Heart right ventricle (tissue), 16 donors: ENCODE measurements at regions of chr1 and their contacts with region 1.

Region 1: DNA sequence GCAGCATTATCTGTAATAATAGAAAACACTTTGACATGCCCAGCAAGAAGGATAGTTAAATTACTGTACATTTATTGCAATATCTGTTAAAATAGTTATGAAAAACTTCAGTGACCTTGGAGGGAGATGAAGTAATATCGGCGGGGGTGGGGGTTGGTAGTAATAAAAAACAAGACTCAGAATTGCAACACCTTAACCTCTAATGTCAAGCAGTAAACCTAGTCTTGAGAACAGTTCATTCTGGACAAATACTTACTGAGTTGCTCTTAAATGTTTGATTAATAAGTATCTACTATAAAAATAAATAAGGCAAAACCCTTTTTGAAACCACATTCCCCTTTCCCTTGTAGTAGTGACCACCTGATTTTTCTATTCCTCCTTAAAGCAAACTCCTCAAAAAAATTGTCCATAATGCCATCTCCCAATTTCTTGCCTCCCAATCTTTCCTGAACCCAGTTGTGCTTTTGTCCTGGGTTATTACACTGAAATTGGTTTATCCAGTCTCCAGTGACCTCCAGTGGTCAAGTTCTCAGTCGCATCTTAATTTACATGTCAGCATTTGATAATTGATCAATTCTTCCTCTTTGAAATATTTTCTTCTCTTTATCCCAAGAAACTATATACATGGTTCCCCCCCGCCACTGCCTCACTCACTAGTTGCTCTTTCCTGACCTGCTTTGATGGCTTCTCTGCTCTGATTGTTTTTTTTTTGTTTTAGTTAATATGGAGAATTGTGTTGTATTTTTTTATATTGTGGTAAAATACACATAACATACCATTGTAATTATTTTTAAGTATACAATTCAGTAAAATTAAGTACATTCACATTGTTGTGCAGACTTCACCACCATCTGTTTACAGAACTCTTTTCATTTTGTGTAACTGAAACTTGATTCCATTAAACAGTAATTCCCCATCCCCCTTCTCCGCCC is 36.8 kb downstream of the RAP1A start:
- DNase-seq: peak in 1 of 2 donors; percentile 41
- ATAC-seq: peak in 7 of 8 donors; percentile 67 to 75 (median 70)
- H3K4me3 ChIP-seq: no peak overlapping the region
- H3K27ac ChIP-seq: peak overlapping the region in 2 of 10 donors; percentile 16 to 22
- H3K4me1 ChIP-seq: peaks cover 0 to 80% (median 33%) of the 10 kb centered on the region in 9 donors
- H3K27me3 ChIP-seq: no peaks in the 10 kb centered on the region
- CTCF ChIP-seq: peak; percentile 31 to 81 (median 67)

Region 2: DNA sequence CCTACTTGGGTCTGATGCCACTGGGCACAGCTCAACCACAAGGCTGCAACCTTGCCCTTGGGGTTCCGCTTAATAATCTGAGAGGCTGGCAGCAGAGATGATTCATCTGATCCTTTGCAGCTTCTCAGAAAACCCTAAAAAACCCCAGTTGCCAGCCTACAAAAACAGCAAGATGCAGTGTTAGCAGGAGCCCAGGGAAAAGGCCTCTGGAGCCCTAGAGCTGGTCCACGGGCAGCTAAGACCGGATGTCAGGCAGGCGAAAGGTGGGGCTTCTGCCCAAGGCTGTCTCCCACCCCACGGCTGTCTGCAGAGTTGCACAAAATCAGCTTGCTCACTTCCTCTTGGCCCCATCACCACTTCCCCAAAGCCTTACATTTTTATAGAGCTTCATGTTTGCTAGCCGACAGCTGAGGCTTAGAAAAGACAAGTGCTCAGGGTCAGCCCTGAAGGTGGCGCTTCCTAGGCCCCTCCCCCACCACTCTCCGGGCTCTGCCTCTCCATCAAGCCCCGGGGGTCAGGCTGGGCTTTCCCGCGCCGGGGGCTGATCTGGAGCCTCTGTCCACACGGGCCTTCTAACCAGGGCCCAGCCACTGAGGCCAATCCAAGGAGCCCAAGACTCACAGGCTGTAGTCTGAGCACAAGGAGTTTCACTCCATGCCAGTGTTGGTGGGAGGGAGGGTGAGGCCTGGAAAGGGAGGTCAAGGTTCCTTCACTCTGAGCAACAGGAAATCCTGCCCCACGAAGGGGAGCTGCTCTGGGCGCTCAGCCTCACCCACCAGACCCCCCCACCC is 148.7 kb before region 1 on chr1:
- intact Hi-C with region 1: loop called (anchors 1 to 5 kb)
- DNase-seq: peak; percentile 73 to 79
- ATAC-seq: peak; percentile 59 to 85 (median 75)
- H3K4me3 ChIP-seq: peak overlapping the region in 9 of 10 donors; percentile 6 to 52 (median 31)
- H3K27ac ChIP-seq: peak overlapping the region; percentile 61 to 99 (median 90)
- H3K4me1 ChIP-seq: peaks cover 20 to 95% (median 48%) of the 10 kb centered on the region in 9 donors
- H3K27me3 ChIP-seq: no peaks in the 10 kb centered on the region
- CTCF ChIP-seq: no peak

Region 3: DNA sequence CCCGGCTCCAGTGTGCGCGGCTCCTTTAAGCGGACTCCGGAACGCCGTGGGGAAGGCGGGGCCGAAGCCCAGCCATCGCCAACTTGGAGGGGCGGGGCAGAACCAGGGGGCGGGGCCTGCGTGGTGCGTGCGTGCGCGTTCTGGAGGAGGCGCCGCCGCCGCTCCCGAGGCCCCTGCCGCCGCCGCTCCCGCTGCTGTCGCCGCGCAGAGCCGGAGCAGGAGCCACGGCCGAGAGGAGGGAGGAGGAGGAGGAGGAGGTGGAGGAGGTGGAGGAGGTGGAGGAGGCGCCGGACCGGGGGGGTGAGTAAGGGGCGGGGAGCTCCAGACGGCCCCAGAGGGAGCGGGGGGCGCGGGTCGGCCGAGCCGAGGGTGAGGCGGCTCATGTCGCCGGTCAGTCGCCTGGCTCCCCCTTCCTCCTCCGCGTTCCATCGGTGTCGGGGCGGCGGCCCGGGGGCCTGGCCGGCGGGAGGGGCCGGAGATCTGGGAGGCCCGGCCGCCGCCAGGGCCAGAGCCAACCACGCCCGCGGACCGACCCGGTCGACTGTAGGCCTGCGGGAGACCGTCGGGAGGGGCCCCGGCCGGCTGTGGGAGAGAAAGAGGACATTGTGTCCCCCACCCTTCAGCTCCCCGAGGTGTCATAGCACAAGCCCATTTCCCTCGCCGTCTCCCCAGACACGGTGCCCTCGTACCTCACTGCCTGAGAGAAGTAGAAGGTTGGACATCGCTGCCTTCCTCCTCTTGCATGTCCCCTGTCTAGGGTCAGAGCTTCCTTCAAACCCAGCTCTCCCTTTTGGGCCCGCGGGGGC is 36.5 kb before region 1 on chr1 and contains the start of gene RAP1A:
- intact Hi-C with region 1: loop called in 1 of 10 experiments (anchors 5 kb)
- DNase-seq: peak; percentile 96 to 98
- ATAC-seq: peak; percentile 96 to 98 (median 97)
- H3K4me3 ChIP-seq: peak within 1 kb of the TSS; percentile 70 to 97 (median 89)
- H3K27ac ChIP-seq: peak within 1 kb of the TSS; percentile 97 to 100 (median 98)
- H3K4me1 ChIP-seq: peaks cover 5 to 79% (median 56%) of the 10 kb centered on the region in 9 donors
- H3K27me3 ChIP-seq: no peaks in the 10 kb centered on the region
- CTCF ChIP-seq: no peak
- total RNA-seq, gene RAP1A: 83.4 to 120 (median 102) TPM